Naive thymus-derived CD4-positive, alpha-beta T cell (primary cell): ENCODE measurements at regions of chrX and their contacts with region 1.

Region 1: DNA sequence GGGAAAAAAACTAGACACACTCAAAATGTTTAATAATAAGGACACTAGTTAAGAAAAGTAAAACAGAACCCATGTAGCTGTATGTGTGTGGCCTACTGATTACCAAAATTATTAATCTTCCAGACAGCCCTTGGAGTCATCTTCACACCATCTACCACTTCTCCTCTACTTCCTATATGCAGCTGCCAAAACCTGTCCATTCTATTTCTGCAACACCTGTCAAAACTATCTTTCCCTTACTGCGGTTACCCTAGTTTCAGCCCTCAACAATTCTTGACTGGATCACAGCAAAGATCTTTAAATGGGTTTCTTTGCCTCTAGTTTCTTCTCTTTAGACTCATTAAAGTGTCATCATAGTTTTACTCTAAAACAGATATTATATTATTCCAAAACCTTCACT is 72.6 kb downstream of the GPR82 start:
- DNase-seq: no peak
- ATAC-seq: no peak
- H3K4me3 ChIP-seq: no peak overlapping the region
- H3K4me3 Mint-ChIP-seq: no peak overlapping the region
- H3K27ac ChIP-seq: no peak overlapping the region
- H3K27ac Mint-ChIP-seq: peak overlapping the region in 2 of 9 donors; percentile 34 to 62
- H3K4me1 ChIP-seq: peaks cover 0 to 4% of the 10 kb centered on the region in 2 donors
- H3K4me1 Mint-ChIP-seq: peaks cover 6 to 34% (median 14%) of the 10 kb centered on the region in 7 donors
- H3K27me3 ChIP-seq: no peaks in the 10 kb centered on the region
- H3K27me3 Mint-ChIP-seq: no peaks in the 10 kb centered on the region

Region 2: GRCh38 chrX:41932885-41933284 is 136.3 kb after region 1 on chrX:
- CTCF ChIA-PET with region 1: no interaction called
- POLR2A ChIA-PET with region 1: no interaction called
- intact Hi-C with region 1: no loop called
- DNase-seq: no peak
- ATAC-seq: no peak
- H3K4me3 ChIP-seq: no peak overlapping the region
- H3K4me3 Mint-ChIP-seq: no peak overlapping the region
- H3K27ac ChIP-seq: no peak overlapping the region
- H3K27ac Mint-ChIP-seq: no peak overlapping the region
- H3K4me1 ChIP-seq: peaks cover 0 to 4% of the 10 kb centered on the region in 2 donors
- H3K4me1 Mint-ChIP-seq: peaks cover 0 to 7% (median under 1%) of the 10 kb centered on the region in 7 donors
- H3K27me3 ChIP-seq: no peaks in the 10 kb centered on the region
- H3K27me3 Mint-ChIP-seq: peaks cover 0 to 8% (median 0%) of the 10 kb centered on the region in 5 donors

Region 3: DNA sequence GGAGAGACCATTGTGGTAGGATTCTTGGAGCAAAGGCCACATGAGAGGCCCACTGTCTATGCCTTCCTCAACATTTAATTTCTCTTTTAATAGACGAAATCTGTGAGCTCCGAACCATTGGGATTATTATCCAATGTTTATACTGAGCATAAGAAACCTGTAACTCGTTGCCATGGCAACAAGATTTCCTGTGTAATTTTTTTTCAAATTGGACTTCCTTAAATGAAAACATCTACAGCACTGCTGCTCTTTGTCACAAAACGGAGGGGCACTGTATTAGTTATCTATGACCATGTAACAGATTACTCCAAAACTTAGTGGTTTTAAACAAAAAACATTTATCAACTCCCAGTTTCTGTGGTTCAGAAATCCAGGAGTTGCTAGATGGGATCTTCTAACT is 942.7 kb after region 1 on chrX:
- CTCF ChIA-PET with region 1: no interaction called
- POLR2A ChIA-PET with region 1: no interaction called
- intact Hi-C with region 1: loop called in 1 of 2 experiments (anchors 10 kb)
- DNase-seq: peak in 5 of 9 donors; percentile 18 to 51 (median 40)
- ATAC-seq: no peak
- H3K4me3 ChIP-seq: no peak overlapping the region
- H3K4me3 Mint-ChIP-seq: peak overlapping the region in 7 of 10 donors; percentile 23 to 64 (median 36)
- H3K27ac ChIP-seq: peak overlapping the region; percentile 10
- H3K27ac Mint-ChIP-seq: peak overlapping the region in 8 of 9 donors; percentile 62 to 90 (median 80)
- H3K4me1 ChIP-seq: peaks cover 0 to 4% of the 10 kb centered on the region in 2 donors
- H3K4me1 Mint-ChIP-seq: peaks cover 0 to 31% (median 25%) of the 10 kb centered on the region in 7 donors
- H3K27me3 ChIP-seq: no peaks in the 10 kb centered on the region
- H3K27me3 Mint-ChIP-seq: no peaks in the 10 kb centered on the region

Region 4: GRCh38 chrX:43750248-43750676 is 1953.7 kb after region 1 on chrX:
- CTCF ChIA-PET with region 1: interaction called, 3 read pairs
- POLR2A ChIA-PET with region 1: no interaction called
- intact Hi-C with region 1: loop called (anchors 5 to 10 kb)
- DNase-seq: peak in 8 of 9 donors; percentile 18 to 65 (median 40)
- ATAC-seq: peak; percentile 72
- H3K4me3 ChIP-seq: no peak overlapping the region
- H3K4me3 Mint-ChIP-seq: no peak overlapping the region
- H3K27ac ChIP-seq: no peak overlapping the region
- H3K27ac Mint-ChIP-seq: no peak overlapping the region
- H3K4me1 ChIP-seq: no peaks in the 10 kb centered on the region
- H3K4me1 Mint-ChIP-seq: peaks cover 0 to 7% (median 0%) of the 10 kb centered on the region in 7 donors
- H3K27me3 ChIP-seq: no peaks in the 10 kb centered on the region
- H3K27me3 Mint-ChIP-seq: no peaks in the 10 kb centered on the region